ENCODE measurements at regions of chr19 and their contacts with region 1.

Region 1: GRCh38 chr19:56594783-56595547 is at the start of gene ZNF71:
- DNase-seq: peak; percentile 66 to 92
- H3K4me3 ChIP-seq: peak within 1 kb of the TSS; percentile 75
- H3K27ac ChIP-seq: no peak within 1 kb of the TSS
- H3K4me1 ChIP-seq: 0 out of 2 replicates have a peak, but pooled peaks cover 4% of the 10 kb centered on the region
- H3K27me3 ChIP-seq: no peaks in the 10 kb centered on the region; the same call in 1 of the 2 replicates
- CTCF ChIP-seq: no peak
- total RNA-seq, gene ZNF71: 7.1 and 7.2 TPM in 2 replicates

Region 2: DNA sequence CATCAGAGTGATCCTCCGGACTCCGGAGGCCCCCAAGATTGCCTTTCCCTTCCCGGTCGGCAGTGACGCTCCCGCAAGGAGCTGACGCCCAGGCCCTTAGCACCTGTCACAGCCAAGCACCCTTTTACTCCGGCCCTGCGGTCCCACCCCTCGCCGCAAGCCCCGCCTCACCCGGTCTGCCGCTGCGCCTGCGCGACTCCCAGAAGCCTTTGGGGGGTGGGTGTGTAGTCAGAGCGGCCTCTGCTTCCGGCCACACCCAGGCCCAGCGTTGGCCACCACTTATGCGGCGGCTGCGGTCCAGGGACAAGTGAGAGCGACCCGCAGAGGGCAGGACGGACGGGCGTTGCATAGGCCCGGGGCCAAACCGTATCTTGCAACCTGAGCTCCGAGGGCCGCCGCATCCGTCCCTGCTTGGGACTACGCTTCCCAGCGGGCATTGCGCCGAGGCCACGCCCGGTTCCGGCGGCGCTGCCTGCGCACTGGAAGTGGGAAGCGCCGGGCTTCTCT is 56.7 kb before region 1 on chr19:
- CTCF ChIA-PET with region 1: no interaction called
- POLR2A ChIA-PET with region 1: no interaction called
- intact Hi-C with region 1: loop called (anchors 1 kb)
- DNase-seq: peak; percentile 81 to 86
- H3K4me3 ChIP-seq: peak overlapping the region; percentile 87
- H3K27ac ChIP-seq: peak overlapping the region; percentile 43; the same call in 1 of the 2 replicates
- H3K4me1 ChIP-seq: 0 out of 2 replicates have a peak, but pooled peaks cover 9% of the 10 kb centered on the region
- H3K27me3 ChIP-seq: no peaks in the 10 kb centered on the region
- CTCF ChIP-seq: no peak

Region 3: DNA sequence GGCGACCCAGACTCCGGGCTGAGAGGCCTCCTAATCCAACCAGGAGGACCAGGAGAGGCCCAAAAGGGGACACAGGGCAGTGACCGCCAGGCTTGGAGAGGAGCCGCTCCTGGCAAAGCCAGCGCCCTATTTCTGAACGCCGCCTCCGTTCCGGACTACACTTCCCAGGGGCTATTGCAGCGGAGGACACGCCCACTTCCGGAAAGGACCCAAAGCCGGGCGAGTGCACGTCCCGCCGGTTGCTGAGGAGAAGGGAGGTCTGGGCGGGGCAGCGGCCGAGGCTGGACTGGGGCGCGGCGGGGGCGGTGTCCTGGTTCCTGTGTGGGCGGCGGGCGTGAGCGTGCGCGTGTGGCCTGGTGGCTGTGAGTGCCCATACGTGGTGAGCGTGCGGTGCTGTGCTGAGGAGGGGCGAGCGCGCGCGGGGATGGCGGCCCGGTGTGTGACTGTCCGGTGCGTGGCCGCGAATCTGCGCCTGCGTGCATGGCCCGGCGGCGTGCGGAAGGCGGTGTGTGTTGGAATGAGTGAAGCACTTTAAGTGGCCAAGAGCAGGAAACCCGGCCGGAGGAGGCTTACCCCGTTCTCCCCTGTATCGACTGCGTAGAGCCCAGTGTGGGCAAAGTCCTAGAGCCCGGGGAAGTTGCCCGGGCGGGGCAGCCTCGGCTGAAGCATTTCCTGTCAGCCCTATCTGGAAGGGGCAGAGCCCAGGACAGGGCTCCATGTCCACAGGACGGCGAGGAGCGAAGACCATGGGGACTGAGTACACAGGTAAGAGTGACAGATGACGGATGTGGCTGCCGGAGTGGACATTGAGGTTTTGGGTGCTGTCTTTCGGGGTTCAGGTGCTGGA is 27.5 kb before region 1 on chr19 and contains the start of gene ZNF470:
- CTCF ChIA-PET with region 1: no interaction called
- POLR2A ChIA-PET with region 1: no interaction called
- intact Hi-C with region 1: loop called (anchors 1 kb)
- DNase-seq: peak; percentile 83 to 95
- H3K4me3 ChIP-seq: peak within 1 kb of the TSS; percentile 79
- H3K27ac ChIP-seq: no peak within 1 kb of the TSS
- H3K4me1 ChIP-seq: no peaks in the 10 kb centered on the region
- H3K27me3 ChIP-seq: no peaks in the 10 kb centered on the region
- CTCF ChIP-seq: no peak
- total RNA-seq, gene ZNF470: 1.2 and 1.7 TPM in 2 replicates

Region 4: GRCh38 chr19:56611288-56611687 is 16.3 kb after region 1 on chr19:
- CTCF ChIA-PET with region 1: no interaction called
- POLR2A ChIA-PET with region 1: no interaction called
- intact Hi-C with region 1: no loop called
- DNase-seq: no peak
- H3K4me3 ChIP-seq: no peak overlapping the region
- H3K27ac ChIP-seq: no peak overlapping the region
- H3K4me1 ChIP-seq: no peaks in the 10 kb centered on the region
- H3K27me3 ChIP-seq: no peaks in the 10 kb centered on the region
- CTCF ChIP-seq: no peak

Region 5: DNA sequence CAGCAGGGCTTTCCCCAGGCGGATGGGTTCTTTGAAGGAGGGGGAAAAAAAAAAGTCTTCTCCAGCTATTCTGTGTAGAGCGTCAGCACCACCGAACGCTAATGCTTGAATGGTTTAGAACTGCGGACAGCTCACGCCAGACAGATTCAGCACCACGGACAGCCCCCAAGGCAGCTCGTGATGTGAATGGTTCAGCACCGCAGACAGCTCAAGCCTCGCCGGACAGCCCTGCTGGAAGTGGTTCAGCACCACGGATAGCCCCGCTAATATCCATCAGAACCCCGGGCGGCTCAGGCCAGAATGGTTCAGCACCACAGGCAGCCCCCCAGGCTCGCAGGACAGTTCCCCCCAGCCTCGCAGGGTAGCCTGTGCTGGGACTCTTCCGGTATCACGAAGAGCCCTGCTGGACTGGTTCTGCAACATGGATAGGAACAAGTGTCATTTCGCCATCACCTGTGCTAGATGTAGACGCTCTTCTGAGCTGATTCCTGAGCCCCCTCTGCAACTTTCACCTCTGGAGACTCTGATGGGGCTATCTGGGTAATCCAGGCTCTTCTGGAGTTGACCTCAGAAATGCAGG is 43.1 kb after region 1 on chr19:
- CTCF ChIA-PET with region 1: no interaction called
- POLR2A ChIA-PET with region 1: no interaction called
- intact Hi-C with region 1: no loop called
- DNase-seq: peak; percentile 68 to 72
- H3K4me3 ChIP-seq: no peak overlapping the region
- H3K27ac ChIP-seq: no peak overlapping the region
- H3K4me1 ChIP-seq: no peaks in the 10 kb centered on the region
- H3K27me3 ChIP-seq: peaks cover 10% of the 10 kb centered on the region
- CTCF ChIP-seq: no peak